Activated CD4-positive, alpha-beta T cell treated with anti-CD3 and anti-CD28 coated beads, Interleukin-2, amount 10 ng/mL, durations not matched to agents 24 days and 14 days (primary cell): ENCODE measurements at regions of chrX and their contacts with region 1.

Region 1: DNA sequence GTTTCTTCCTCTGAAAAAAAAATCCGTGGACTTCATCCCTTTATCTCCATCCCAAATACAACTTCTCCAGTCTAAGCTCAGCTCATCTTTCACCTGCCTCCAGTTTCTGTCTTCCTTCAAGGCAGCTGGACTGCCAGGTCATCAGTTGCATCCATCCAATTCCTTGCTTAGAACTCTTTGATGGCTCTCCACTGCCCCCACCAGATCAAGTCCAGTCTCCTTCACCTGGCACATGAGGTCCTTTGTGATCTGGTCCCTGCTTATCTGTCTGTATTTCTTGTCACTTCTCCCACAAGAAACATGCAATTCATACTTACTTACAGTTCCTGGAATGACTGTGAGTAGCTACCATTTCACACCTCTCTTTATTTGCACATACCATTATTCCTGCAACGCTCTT is 33.8 kb downstream of the OTUD6A start:
- DNase-seq: no peak
- H3K4me3 Mint-ChIP-seq: no peak overlapping the region
- H3K27ac Mint-ChIP-seq: no peak overlapping the region
- H3K4me1 Mint-ChIP-seq: no peaks in the 10 kb centered on the region
- H3K27me3 Mint-ChIP-seq: peaks cover 3% of the 10 kb centered on the region

Region 2: GRCh38 chrX:69493193-69493592 is 602.9 kb before region 1 on chrX:
- intact Hi-C with region 1: loop called (anchors 2 kb)
- DNase-seq: peak; percentile 79
- H3K4me3 Mint-ChIP-seq: no peak overlapping the region
- H3K27ac Mint-ChIP-seq: no peak overlapping the region
- H3K4me1 Mint-ChIP-seq: no peaks in the 10 kb centered on the region
- H3K27me3 Mint-ChIP-seq: no peaks in the 10 kb centered on the region

Region 3: DNA sequence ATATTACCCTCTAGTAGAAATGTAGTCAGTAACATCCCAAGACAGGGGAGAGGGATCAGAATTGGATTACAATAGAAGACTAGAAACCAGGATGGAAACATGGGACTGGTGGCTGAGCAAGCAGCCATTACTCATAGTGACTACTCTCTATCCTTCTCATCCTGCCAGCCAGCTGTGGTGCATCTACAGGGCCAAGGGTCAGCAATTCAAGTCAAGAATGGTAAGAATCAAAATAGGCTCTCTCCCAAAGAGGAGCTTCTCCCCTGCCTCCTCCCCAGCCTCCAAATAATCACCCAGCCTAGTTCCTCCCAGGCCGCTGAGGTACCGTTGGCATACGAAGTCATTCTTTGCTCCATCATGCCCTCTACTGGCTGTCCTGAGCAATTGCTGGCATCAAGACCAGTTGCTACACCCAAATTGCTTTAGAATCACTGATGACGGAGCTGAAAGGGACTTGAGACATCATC is 65.7 kb before region 1 on chrX:
- intact Hi-C with region 1: loop called (anchors 2 kb)
- DNase-seq: peak; percentile 83
- H3K4me3 Mint-ChIP-seq: no peak overlapping the region
- H3K27ac Mint-ChIP-seq: no peak overlapping the region
- H3K4me1 Mint-ChIP-seq: peaks cover 20% of the 10 kb centered on the region
- H3K27me3 Mint-ChIP-seq: no peaks in the 10 kb centered on the region

Region 4: GRCh38 chrX:70262952-70263567 is 167.0 kb after region 1 on chrX:
- intact Hi-C with region 1: no loop called
- DNase-seq: peak; percentile 77
- H3K4me3 Mint-ChIP-seq: no peak overlapping the region
- H3K27ac Mint-ChIP-seq: no peak overlapping the region
- H3K4me1 Mint-ChIP-seq: no peaks in the 10 kb centered on the region
- H3K27me3 Mint-ChIP-seq: no peaks in the 10 kb centered on the region

Region 5: DNA sequence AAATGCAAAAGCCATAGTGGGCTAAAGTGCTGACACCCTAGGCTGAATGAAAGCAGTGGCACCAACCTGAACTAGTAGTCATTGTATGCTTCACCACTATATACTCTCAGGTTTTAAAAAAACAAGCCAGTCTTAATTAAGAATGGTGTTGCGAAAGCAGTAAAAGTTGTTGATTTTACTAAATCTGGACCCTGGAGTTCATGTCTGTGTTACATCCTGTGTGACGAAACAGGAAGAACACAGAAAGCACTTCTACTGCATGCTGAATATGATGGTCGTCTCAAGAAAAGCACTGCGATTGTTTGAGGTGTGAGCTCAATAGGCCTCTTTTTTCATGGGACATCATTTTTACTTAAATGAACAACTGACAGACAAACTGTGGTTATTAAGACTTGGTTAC is 302.8 kb after region 1 on chrX:
- intact Hi-C with region 1: no loop called
- DNase-seq: no peak
- H3K4me3 Mint-ChIP-seq: no peak overlapping the region
- H3K27ac Mint-ChIP-seq: peak overlapping the region; percentile 69
- H3K4me1 Mint-ChIP-seq: peaks cover 2% of the 10 kb centered on the region
- H3K27me3 Mint-ChIP-seq: no peaks in the 10 kb centered on the region